T-cell (primary cell): ENCODE measurements at regions of chr18 and their contacts with region 1.

Region 1: DNA sequence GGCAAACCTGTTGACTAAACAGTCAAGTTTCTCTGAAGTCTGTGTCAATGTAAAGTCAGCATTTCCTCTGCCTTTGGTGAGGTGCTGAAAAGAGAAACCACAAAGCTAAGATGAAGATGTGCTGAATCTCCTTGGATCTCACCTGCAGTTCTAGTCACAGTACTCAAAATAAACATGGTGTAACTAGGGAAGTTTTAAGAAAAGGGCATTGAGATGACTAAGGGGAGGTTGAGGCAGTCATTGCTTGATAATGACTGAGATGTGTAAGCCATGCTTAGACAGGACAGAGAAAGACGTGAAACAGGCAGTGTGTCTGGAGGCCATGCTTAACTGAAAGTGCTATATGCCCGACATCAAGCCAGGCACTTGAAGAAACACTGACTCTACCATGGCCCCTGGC is 1010.0 kb upstream of the CELF4 start:
- DNase-seq: peak in 1 of 35 experiments; percentile 52
- ATAC-seq: peak; percentile 49 to 77 (median 60)
- H3K4me3 ChIP-seq: no peak overlapping the region
- H3K4me3 Mint-ChIP-seq: peak overlapping the region in 2 of 3 donors; percentile 22 to 69
- H3K27ac ChIP-seq: no peak overlapping the region
- H3K27ac Mint-ChIP-seq: peak overlapping the region in 1 of 2 donors; percentile 6
- H3K4me1 ChIP-seq: peaks cover 9 to 23% of the 10 kb centered on the region in 2 experiments
- H3K4me1 Mint-ChIP-seq: peaks cover 28 to 41% (median 33%) of the 10 kb centered on the region in 3 donors
- H3K27me3 ChIP-seq: no peaks in the 10 kb centered on the region
- H3K27me3 Mint-ChIP-seq: no peaks in the 10 kb centered on the region

Region 2: DNA sequence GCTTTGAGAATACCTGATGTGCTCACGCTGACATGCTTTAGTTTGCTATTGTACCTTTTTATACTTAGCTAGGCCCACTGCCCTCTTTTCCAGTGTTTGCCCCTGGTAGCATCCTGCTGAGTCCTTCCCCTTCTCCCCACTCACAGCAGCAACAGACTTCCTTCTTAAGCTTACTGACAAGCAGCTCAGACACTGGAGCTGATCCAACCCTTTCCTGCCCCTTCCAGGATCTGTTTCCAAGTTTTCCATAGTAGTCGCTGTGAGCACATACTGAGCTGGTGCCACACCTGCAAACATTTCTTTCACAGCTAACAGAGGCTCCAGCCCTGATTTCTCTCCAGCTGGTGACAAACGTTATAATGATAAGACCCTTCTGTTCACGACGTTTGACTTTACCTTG is 18.6 kb before region 1 on chr18:
- CTCF ChIA-PET with region 1: no interaction called
- POLR2A ChIA-PET with region 1: interaction called in 1 of 2 experiments, 10 read pairs
- DNase-seq: no peak
- ATAC-seq: no peak
- H3K4me3 ChIP-seq: no peak overlapping the region
- H3K4me3 Mint-ChIP-seq: no peak overlapping the region
- H3K27ac ChIP-seq: no peak overlapping the region
- H3K27ac Mint-ChIP-seq: no peak overlapping the region
- H3K4me1 ChIP-seq: no peaks in the 10 kb centered on the region
- H3K4me1 Mint-ChIP-seq: no peaks in the 10 kb centered on the region
- H3K27me3 ChIP-seq: no peaks in the 10 kb centered on the region
- H3K27me3 Mint-ChIP-seq: no peaks in the 10 kb centered on the region

Region 3: GRCh38 chr18:38663270-38663669 is 87.6 kb after region 1 on chr18:
- CTCF ChIA-PET with region 1: no interaction called
- POLR2A ChIA-PET with region 1: interaction called in 1 of 2 experiments, 10 read pairs
- DNase-seq: no peak
- ATAC-seq: no peak
- H3K4me3 ChIP-seq: no peak overlapping the region
- H3K4me3 Mint-ChIP-seq: no peak overlapping the region
- H3K27ac ChIP-seq: no peak overlapping the region
- H3K27ac Mint-ChIP-seq: no peak overlapping the region
- H3K4me1 ChIP-seq: no peaks in the 10 kb centered on the region
- H3K4me1 Mint-ChIP-seq: peaks cover 0 to 6% (median 0%) of the 10 kb centered on the region in 3 donors
- H3K27me3 ChIP-seq: no peaks in the 10 kb centered on the region
- H3K27me3 Mint-ChIP-seq: no peaks in the 10 kb centered on the region